ENCODE measurements at regions of chr12 and their contacts with region 1.

Region 1: DNA sequence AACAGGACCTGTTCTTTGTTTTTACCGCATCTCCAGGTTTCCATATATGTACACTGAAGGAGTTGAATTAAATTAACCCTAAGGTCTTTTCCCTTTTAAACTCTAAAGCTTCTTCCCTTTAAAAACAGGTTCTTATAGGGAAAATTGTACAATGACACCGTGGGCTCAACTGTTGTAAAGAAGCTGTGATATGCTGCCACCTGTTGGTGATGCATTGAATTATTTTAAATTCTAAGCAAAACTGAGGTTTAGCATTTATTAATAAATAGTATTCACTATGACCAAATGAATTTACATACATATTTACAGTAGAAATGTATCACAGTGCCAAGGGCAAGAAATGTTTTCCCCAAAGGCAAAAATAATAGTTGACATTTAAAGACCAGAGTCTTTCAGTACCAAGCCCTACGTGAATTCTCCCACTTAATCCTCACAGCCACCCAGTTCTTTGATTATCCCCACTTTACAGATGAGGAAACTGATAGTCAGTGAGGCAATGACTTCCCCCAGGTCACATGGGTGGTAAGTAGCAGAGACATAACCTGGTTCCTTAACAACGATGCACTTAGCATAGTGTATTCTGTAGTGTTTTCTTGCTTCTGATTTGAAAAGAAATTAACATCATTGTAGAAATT is 35.7 kb upstream of the TMEM263 start:
- DNase-seq: peak; percentile 54
- H3K4me3 ChIP-seq: no peak overlapping the region
- H3K27ac ChIP-seq: no peak overlapping the region
- H3K4me1 ChIP-seq: no peaks in the 10 kb centered on the region
- H3K27me3 ChIP-seq: no peaks in the 10 kb centered on the region
- CTCF ChIP-seq: peak; percentile 86
- EP300 ChIP-seq: no peak
- RAD21 ChIP-seq: peak; percentile 88

Region 2: DNA sequence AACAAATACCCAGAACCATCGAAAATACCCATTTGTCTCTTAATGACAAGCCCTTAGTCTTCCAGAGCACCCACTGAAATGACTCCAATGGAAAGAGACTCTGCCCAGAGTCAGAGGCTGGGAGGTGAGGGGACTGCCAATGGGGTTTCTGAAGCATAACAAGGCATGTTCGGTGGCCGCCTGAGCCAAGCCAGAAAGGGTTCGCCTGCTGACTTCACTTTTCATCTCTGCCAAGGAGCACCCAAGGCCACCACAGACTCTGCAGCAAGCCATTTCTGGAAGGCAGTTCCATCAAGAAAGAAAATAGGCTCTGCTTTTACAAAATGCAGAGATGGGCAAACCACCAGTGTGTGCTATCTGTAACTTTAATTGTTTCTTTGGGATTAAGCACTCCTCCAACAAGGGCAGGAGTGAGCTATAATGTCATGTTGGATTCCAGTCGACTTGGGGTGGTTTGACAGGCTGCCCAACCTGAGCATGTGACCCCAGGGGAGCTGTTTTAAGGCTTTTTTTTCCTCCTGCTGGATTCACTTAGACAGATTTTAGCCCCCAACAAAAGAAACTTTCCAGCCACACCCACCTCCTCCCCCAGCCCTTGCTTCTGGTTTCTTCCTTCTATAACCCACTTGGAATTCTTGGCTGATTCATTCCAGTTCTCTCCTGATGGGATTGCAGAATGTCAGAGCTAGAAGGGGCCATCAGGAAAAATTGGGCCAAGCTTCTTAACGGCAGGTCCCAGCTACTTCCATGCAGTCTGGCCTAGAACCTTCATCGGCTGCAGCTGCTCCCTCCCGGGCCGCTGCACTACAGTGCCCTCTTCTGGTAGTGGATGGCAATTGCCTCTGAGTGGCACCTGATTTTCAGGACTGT is 696.3 kb before region 1 on chr12:
- CTCF ChIA-PET with region 1: interaction called, 36 read pairs
- POLR2A ChIA-PET with region 1: no interaction called
- DNase-seq: peak; percentile 81
- H3K4me3 ChIP-seq: peak overlapping the region in 1 of 2 experiments; percentile 21; a peak in 1 of 4 replicates
- H3K27ac ChIP-seq: no peak overlapping the region
- H3K4me1 ChIP-seq: no peaks in the 10 kb centered on the region
- H3K27me3 ChIP-seq: no peaks in the 10 kb centered on the region
- CTCF ChIP-seq: peak; percentile 87
- EP300 ChIP-seq: no peak
- RAD21 ChIP-seq: peak; percentile 75

Region 3: DNA sequence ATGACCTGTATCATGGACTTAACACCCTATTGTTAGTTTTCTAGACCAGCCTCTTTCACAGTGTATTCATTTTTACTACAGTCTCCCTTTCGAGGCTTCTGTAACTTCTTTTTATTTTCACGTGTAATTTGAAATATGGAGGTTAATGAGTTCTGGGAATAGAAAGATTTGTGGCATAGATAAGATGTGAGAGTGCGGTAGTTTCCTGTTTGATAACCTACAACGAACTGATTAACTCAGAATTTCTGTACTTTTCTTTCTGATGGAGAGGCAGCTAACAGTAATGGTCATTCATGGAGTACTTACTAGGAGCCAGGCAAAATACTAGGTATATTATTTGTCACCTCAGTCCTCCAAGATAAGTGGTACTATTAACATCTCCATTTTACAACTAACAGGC is 541.2 kb before region 1 on chr12:
- CTCF ChIA-PET with region 1: interaction called, 92 read pairs
- POLR2A ChIA-PET with region 1: no interaction called
- DNase-seq: no peak
- H3K4me3 ChIP-seq: no peak overlapping the region
- H3K27ac ChIP-seq: no peak overlapping the region
- H3K4me1 ChIP-seq: no peaks in the 10 kb centered on the region
- H3K27me3 ChIP-seq: no peaks in the 10 kb centered on the region
- CTCF ChIP-seq: no peak
- EP300 ChIP-seq: no peak
- RAD21 ChIP-seq: no peak

Region 4: GRCh38 chr12:106386813-106387535 is 533.1 kb before region 1 on chr12:
- CTCF ChIA-PET with region 1: interaction called, 92 read pairs
- POLR2A ChIA-PET with region 1: no interaction called
- DNase-seq: no peak
- H3K4me3 ChIP-seq: no peak overlapping the region
- H3K27ac ChIP-seq: no peak overlapping the region
- H3K4me1 ChIP-seq: no peaks in the 10 kb centered on the region
- H3K27me3 ChIP-seq: no peaks in the 10 kb centered on the region
- CTCF ChIP-seq: no peak
- EP300 ChIP-seq: no peak
- RAD21 ChIP-seq: no peak

Region 5: DNA sequence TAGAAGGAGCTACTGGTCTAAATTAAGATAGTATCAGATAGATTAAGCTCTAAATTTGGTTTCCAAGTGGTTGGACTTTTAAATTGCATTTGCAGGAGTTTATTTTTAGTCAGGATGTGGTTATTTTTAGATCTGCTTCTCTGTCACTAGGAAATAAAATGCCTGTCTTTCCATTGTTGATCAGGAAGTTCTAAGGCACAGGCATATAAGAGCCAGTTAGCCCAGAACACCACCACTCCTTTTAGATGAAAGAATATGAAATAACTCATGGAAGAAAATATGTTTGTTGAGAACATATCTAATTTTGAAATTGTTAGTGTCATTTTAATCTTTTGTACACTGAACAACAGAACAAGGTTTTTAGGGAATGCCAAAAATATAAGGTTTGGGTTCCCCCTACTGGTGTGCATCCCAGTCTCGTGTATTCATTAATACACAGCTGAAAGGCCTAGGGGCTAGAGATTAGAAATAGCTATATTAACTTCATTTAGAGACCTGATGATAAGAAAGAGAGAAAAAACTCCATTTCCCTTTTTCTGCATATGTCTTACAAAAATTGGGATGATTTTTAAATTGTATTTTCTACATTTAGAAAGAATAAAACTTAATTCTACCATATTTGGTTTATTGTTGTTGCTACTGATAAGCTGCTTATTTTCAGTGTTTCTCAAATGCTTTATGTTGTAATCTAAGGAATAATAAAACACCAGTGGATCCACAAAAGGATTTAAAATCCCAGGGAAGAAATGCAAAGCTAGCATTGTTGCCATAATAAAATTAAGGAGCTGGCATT is 78.3 kb before region 1 on chr12:
- CTCF ChIA-PET with region 1: interaction called, 10 read pairs
- POLR2A ChIA-PET with region 1: no interaction called
- DNase-seq: peak; percentile 65
- H3K4me3 ChIP-seq: peak overlapping the region in 1 of 2 experiments; percentile 8; a peak in 1 of 4 replicates
- H3K27ac ChIP-seq: peak overlapping the region; percentile 55 to 60
- H3K4me1 ChIP-seq: peaks cover 9 to 27% of the 10 kb centered on the region in 2 experiments; a peak in 2 of 4 replicates
- H3K27me3 ChIP-seq: no peaks in the 10 kb centered on the region
- CTCF ChIP-seq: peak; percentile 88
- EP300 ChIP-seq: peak; percentile 5 to 32; a peak in 2 of 4 replicates
- RAD21 ChIP-seq: peak; percentile 86

Region 6: GRCh38 chr12:106893451-106893850 is 26.6 kb before region 1 on chr12:
- CTCF ChIA-PET with region 1: interaction called, 11 read pairs
- POLR2A ChIA-PET with region 1: no interaction called
- DNase-seq: no peak
- H3K4me3 ChIP-seq: no peak overlapping the region
- H3K27ac ChIP-seq: no peak overlapping the region
- H3K4me1 ChIP-seq: no peaks in the 10 kb centered on the region
- H3K27me3 ChIP-seq: no peaks in the 10 kb centered on the region
- CTCF ChIP-seq: no peak
- EP300 ChIP-seq: no peak
- RAD21 ChIP-seq: no peak

Region 7: DNA sequence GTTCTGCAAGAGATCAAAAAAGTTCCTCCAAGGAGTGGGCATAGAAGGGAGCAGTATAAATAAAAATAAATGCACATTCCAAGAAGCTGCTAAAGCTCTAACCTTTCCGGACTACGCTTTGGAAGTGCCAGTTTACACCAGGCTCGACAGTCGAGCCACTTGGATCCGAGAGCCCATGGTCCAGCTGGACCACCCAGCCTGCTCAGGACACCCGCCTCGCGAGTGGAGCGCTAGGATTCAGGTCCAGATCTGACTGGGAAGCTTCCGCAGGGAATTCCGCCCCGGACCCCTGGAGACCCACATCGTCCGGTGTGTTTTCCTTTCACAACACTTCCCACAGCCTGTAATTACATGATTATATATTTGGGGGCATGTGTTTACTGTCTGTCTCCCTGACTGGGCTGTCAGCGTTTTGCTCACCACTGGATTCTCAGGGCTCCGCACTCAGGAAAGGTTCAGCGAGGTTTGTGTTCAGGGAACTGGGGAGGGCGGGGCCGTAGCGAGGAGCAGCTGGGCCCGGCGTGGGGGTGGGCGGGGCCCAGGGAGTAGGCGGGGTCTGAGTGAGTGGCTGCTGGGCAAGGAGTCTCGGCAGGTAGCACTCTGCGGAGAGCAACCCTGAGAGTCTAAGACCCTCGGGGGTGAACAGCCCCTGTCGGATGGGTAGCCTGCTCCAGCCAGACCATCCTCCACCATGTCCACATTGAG is 16.6 kb before region 1 on chr12:
- CTCF ChIA-PET with region 1: interaction called, 88 read pairs
- POLR2A ChIA-PET with region 1: interaction called, 3 read pairs
- DNase-seq: peak; percentile 87
- H3K4me3 ChIP-seq: peak overlapping the region; percentile 37 to 59
- H3K27ac ChIP-seq: no peak overlapping the region
- H3K4me1 ChIP-seq: no peaks in the 10 kb centered on the region; a peak in 1 of 4 replicates
- H3K27me3 ChIP-seq: no peaks in the 10 kb centered on the region
- CTCF ChIP-seq: no peak
- EP300 ChIP-seq: no peak
- RAD21 ChIP-seq: no peak

Region 8: GRCh38 chr12:107135177-107135576 is 215.2 kb after region 1 on chr12:
- CTCF ChIA-PET with region 1: no interaction called
- POLR2A ChIA-PET with region 1: no interaction called
- DNase-seq: no peak
- H3K4me3 ChIP-seq: no peak overlapping the region
- H3K27ac ChIP-seq: no peak overlapping the region
- H3K4me1 ChIP-seq: peaks cover 0 to 18% of the 10 kb centered on the region in 2 experiments; a peak in 2 of 4 replicates
- H3K27me3 ChIP-seq: no peaks in the 10 kb centered on the region
- CTCF ChIP-seq: no peak
- EP300 ChIP-seq: no peak
- RAD21 ChIP-seq: no peak

Region 9: GRCh38 chr12:107461222-107461975 is 541.4 kb after region 1 on chr12:
- CTCF ChIA-PET with region 1: no interaction called
- POLR2A ChIA-PET with region 1: no interaction called
- DNase-seq: peak; percentile 70
- H3K4me3 ChIP-seq: no peak overlapping the region; a peak in 1 of 4 replicates
- H3K27ac ChIP-seq: peak overlapping the region in 1 of 2 experiments; percentile 74; a peak in 2 of 4 replicates
- H3K4me1 ChIP-seq: peaks cover 0 to 10% of the 10 kb centered on the region in 2 experiments; a peak in 1 of 4 replicates
- H3K27me3 ChIP-seq: no peaks in the 10 kb centered on the region
- CTCF ChIP-seq: no peak
- EP300 ChIP-seq: peak; percentile 21 to 25; a peak in 1 of 4 replicates
- RAD21 ChIP-seq: 0 out of 2 replicates have a peak, but pooled peaks have one; percentile 10